MCF 10A (cell line): ENCODE measurements at regions of chr12 and their contacts with region 1.

Region 1: GRCh38 chr12:64551698-64552097 is 58.6 kb upstream of the RASSF3 start:
- DNase-seq: no peak
- H3K4me3 Mint-ChIP-seq: no peak overlapping the region
- H3K27ac Mint-ChIP-seq: no peak overlapping the region
- H3K4me1 Mint-ChIP-seq: no peaks in the 10 kb centered on the region
- H3K27me3 Mint-ChIP-seq: no peaks in the 10 kb centered on the region
- CTCF ChIP-seq: no peak

Region 2: GRCh38 chr12:63826006-63826585 is 725.6 kb before region 1 on chr12:
- CTCF ChIA-PET with region 1: interaction called, 3 read pairs
- POLR2A ChIA-PET with region 1: no interaction called
- intact Hi-C with region 1: loop called (anchors 1 kb)
- DNase-seq: peak; percentile 76
- H3K4me3 Mint-ChIP-seq: no peak overlapping the region
- H3K27ac Mint-ChIP-seq: no peak overlapping the region
- H3K4me1 Mint-ChIP-seq: peaks cover 8% of the 10 kb centered on the region
- H3K27me3 Mint-ChIP-seq: no peaks in the 10 kb centered on the region
- CTCF ChIP-seq: peak; percentile 75

Region 3: DNA sequence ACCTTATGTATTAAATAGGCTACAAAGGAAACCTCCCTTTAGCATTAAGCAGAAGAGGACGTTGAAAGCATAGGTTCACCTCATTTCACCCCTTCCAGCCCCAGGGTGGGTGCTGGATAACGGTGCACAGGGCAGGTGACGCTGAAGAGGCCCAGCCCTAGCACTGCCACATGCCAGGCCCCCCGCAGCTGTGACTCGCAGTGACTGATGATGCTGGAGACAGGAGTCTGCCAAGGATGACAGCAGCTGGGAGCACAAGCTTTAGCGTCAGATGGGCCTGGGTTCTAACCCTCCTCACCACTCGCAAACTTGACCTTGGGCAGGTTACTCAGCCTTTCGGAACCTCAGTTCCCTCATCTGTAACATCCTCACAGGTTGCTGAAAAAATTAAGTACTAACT is 23.1 kb before region 1 on chr12:
- CTCF ChIA-PET with region 1: interaction called, 36 read pairs
- POLR2A ChIA-PET with region 1: no interaction called
- intact Hi-C with region 1: no loop called
- DNase-seq: no peak
- H3K4me3 Mint-ChIP-seq: no peak overlapping the region
- H3K27ac Mint-ChIP-seq: no peak overlapping the region
- H3K4me1 Mint-ChIP-seq: no peaks in the 10 kb centered on the region
- H3K27me3 Mint-ChIP-seq: no peaks in the 10 kb centered on the region
- CTCF ChIP-seq: no peak

Region 4: DNA sequence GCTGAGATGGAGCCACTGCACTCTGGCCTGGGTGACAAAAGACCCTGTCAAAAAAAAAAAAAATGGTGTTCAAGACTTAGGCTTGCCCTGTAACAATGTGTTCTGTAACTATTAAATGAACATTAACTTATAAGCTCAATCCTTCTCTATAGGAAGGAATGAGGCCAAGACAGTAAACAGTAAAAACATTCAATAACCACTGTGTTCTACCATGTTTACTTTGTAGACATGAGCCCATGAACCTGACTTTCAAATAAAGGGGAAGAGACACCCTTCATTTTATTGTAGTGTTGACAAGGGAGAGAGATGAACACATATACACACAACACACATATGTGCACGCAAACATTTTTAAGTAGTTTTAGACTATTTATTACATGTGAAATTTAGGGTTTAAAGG is 38.5 kb after region 1 on chr12:
- CTCF ChIA-PET with region 1: interaction called, 13 read pairs
- POLR2A ChIA-PET with region 1: no interaction called
- intact Hi-C with region 1: no loop called
- DNase-seq: no peak
- H3K4me3 Mint-ChIP-seq: no peak overlapping the region
- H3K27ac Mint-ChIP-seq: no peak overlapping the region
- H3K4me1 Mint-ChIP-seq: no peaks in the 10 kb centered on the region
- H3K27me3 Mint-ChIP-seq: no peaks in the 10 kb centered on the region
- CTCF ChIP-seq: no peak

Region 5: GRCh38 chr12:64679487-64679983 is 127.8 kb after region 1 on chr12:
- CTCF ChIA-PET with region 1: interaction called, 11 read pairs
- POLR2A ChIA-PET with region 1: no interaction called
- intact Hi-C with region 1: loop called (anchors 1 kb)
- DNase-seq: peak; percentile 96
- H3K4me3 Mint-ChIP-seq: peak overlapping the region; percentile 60
- H3K27ac Mint-ChIP-seq: peak overlapping the region; percentile 87
- H3K4me1 Mint-ChIP-seq: peaks cover 39% of the 10 kb centered on the region
- H3K27me3 Mint-ChIP-seq: no peaks in the 10 kb centered on the region
- CTCF ChIP-seq: no peak

Region 6: DNA sequence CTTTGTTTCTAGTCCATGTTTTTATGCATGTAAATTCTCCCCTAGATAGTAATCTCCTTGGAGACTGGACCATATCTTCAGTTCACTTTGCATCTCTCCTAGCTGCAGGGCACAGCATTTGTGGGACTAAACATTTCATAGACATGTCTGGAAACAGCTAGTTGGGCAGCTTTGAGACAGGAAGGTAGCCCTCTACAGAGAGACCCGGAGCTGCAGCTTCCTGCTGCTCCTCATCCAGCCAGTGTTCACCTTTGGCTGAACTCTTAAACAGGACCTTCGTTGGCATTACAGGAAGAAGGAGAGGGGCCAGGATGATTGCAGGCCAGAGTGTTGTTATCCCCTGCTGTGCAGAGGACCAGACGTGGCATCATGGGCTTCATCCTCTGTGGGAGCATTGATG is 154.6 kb after region 1 on chr12:
- CTCF ChIA-PET with region 1: interaction called, 51 read pairs
- POLR2A ChIA-PET with region 1: no interaction called
- intact Hi-C with region 1: no loop called
- DNase-seq: no peak
- H3K4me3 Mint-ChIP-seq: no peak overlapping the region
- H3K27ac Mint-ChIP-seq: no peak overlapping the region
- H3K4me1 Mint-ChIP-seq: no peaks in the 10 kb centered on the region
- H3K27me3 Mint-ChIP-seq: no peaks in the 10 kb centered on the region
- CTCF ChIP-seq: no peak

Region 7: DNA sequence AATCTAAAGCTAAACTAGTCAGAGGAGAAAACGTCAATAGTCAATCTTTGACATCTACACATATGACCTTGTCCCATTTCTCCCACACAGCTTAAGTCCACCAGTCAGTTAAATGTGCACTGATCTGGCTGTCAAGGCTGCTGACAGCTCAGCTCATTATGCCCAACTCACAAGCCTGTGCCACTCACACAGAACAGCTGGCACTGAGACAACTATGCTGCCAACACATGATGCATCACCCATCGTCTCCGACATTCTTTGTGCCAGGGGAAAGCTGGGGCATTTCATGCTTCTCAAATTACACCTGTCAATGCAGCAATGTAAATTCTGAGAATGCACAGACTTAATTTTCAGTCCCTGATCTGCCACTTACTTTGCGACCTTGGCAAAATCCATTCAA is 182.2 kb after region 1 on chr12:
- CTCF ChIA-PET with region 1: interaction called, 13 read pairs
- POLR2A ChIA-PET with region 1: no interaction called
- intact Hi-C with region 1: no loop called
- DNase-seq: peak; percentile 99
- H3K4me3 Mint-ChIP-seq: peak overlapping the region; percentile 7
- H3K27ac Mint-ChIP-seq: peak overlapping the region; percentile 2
- H3K4me1 Mint-ChIP-seq: peaks cover 23% of the 10 kb centered on the region
- H3K27me3 Mint-ChIP-seq: no peaks in the 10 kb centered on the region
- CTCF ChIP-seq: no peak

Region 8: DNA sequence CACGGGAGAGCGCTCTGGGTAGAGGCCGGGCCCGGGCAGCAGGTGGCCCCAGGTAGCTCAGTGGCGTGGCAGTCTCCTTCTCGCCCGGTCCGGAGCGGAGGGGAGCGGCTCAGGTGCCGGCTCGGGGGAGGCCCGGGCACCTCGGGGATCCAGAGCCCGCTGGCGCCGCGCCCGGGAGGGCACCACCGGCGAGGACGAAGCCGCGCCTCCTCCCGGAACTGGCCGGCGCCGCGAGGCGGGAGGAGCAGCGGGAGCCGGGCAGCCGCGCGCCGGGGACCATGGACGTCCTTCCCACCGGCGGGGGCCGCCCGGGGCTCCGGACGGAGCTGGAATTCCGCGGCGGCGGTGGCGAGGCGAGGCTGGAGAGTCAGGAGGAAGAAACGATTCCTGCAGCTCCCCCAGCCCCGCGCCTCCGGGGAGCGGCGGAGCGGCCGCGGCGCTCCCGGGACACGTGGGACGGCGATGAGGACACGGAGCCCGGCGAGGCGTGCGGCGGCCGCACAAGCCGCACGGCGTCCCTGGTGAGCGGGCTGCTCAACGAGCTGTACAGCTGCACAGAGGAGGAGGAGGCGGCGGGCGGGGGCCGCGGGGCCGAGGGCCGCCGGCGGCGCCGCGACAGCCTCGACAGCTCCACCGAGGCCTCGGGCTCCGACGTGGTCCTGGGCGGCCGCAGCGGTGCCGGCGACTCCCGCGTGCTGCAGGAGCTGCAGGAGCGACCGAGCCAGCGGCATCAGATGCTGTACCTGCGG is 229.0 kb after region 1 on chr12:
- CTCF ChIA-PET with region 1: no interaction called
- POLR2A ChIA-PET with region 1: no interaction called
- intact Hi-C with region 1: no loop called
- DNase-seq: peak; percentile 57
- H3K4me3 Mint-ChIP-seq: peak overlapping the region; percentile 80
- H3K27ac Mint-ChIP-seq: peak overlapping the region; percentile 23
- H3K4me1 Mint-ChIP-seq: peaks cover 7% of the 10 kb centered on the region
- H3K27me3 Mint-ChIP-seq: peaks cover 17% of the 10 kb centered on the region
- CTCF ChIP-seq: no peak